Heart left ventricle (tissue), 16 donors: ENCODE measurements at regions of chr13 and their contacts with region 1.

Region 1: GRCh38 chr13:59442944-59443486 is 720.7 kb downstream of the DIAPH3 start:
- DNase-seq: no peak
- ATAC-seq: no peak
- H3K4me3 ChIP-seq: no peak overlapping the region
- H3K27ac ChIP-seq: no peak overlapping the region
- H3K4me1 ChIP-seq: peaks cover 0 to 7% (median 0%) of the 10 kb centered on the region in 12 donors
- H3K27me3 ChIP-seq: no peaks in the 10 kb centered on the region
- CTCF ChIP-seq: no peak
- POLR2A ChIP-seq: no peak

Region 2: DNA sequence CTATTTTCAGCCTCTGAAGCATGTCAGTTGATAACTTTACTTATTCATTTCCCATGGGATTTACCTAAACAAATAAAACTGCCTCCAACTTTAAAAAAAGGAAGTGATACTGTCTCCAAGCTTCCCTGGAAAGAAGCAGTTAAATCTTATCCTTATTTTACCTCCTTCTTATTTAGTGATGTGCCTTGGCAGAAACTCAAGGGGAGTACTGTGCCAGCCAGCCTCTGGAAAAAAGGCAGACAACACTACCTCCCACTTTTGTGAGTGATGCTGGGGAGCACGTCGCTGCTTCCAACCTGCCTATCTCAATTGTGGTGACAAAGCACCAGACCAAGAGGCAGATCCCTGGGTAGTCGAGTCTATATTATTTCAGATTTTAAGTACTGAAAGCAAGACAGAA is 44.9 kb before region 1 on chr13:
- intact Hi-C with region 1: loop called in 1 of 10 experiments (anchors 5 kb)
- DNase-seq: peak in 3 of 5 donors; percentile 24 to 51 (median 31)
- ATAC-seq: peak in 3 of 4 donors; percentile 26 to 48 (median 29)
- H3K4me3 ChIP-seq: no peak overlapping the region
- H3K27ac ChIP-seq: peak overlapping the region in 3 of 12 donors; percentile 23 to 37 (median 25)
- H3K4me1 ChIP-seq: peaks cover 0 to 18% (median 6%) of the 10 kb centered on the region in 12 donors
- H3K27me3 ChIP-seq: no peaks in the 10 kb centered on the region
- CTCF ChIP-seq: no peak
- POLR2A ChIP-seq: no peak